Activated CD8-positive, alpha-beta memory T cell treated with anti-CD3 and anti-CD28 coated beads, Interleukin-2, amount 10 ng/mL, durations not matched to agents 7 days and 5 days (primary cell): ENCODE measurements at regions of chr11 and their contacts with region 1.

Region 1: DNA sequence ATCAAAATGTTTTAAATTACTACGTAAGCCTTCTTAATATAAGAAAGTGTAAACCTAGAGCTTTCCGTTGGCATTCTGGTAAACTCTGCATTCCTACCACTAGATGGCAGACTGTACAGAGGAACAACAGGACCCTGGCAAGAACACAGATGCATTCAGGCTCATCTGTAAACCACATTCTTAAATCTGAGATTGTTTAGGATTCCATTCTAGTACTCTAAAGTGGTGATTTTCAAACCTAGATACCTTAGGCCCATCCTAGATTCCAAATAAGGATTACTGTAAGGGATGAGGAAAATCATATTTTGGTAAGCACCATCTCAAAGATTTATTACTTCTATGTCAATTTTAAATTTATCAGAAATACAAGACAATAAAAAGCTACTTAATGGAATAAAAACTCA is 26.9 kb downstream of the PICALM start:
- DNase-seq: peak; percentile 67
- ATAC-seq: peak; percentile 82
- H3K4me3 Mint-ChIP-seq: no peak overlapping the region
- H3K27ac Mint-ChIP-seq: peak overlapping the region; percentile 45
- H3K4me1 Mint-ChIP-seq: peaks cover 66% of the 10 kb centered on the region
- H3K27me3 Mint-ChIP-seq: no peaks in the 10 kb centered on the region

Region 2: GRCh38 chr11:85867751-85868150 is 174.2 kb before region 1 on chr11:
- CTCF ChIA-PET with region 1: no interaction called
- DNase-seq: no peak
- ATAC-seq: no peak
- H3K4me3 Mint-ChIP-seq: no peak overlapping the region
- H3K27ac Mint-ChIP-seq: no peak overlapping the region
- H3K4me1 Mint-ChIP-seq: no peaks in the 10 kb centered on the region
- H3K27me3 Mint-ChIP-seq: peaks cover 4% of the 10 kb centered on the region

Region 3: DNA sequence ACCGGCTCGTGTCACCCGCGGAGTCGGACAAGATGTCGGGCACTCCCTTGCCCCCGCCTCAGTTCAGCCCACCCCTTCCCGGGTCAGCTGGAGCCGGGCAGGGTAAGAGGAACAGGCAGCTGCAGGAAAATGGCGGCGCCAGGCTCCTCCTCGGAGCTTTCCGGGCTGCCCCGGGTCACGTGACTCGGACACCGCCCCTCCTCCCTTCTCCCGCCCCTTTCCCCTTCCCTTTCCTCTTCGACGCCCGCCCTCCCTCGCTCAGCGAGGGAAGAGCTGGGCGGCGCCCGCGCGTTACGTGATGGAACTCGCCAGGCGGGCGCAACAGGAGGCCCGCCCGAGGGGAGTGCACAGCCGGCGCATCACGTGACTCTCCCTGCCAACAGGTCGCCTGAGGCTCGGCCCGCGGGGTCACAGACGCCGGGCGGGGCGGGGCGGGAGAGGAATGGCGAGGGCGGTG is 27.0 kb after region 1 on chr11 and contains the start of gene PICALM:
- CTCF ChIA-PET with region 1: interaction called, 18 read pairs
- DNase-seq: peak; percentile 99
- ATAC-seq: peak; percentile 89
- H3K4me3 Mint-ChIP-seq: peak within 1 kb of the TSS; percentile 100
- H3K27ac Mint-ChIP-seq: peak within 1 kb of the TSS; percentile 92
- H3K4me1 Mint-ChIP-seq: peaks cover 25% of the 10 kb centered on the region
- H3K27me3 Mint-ChIP-seq: no peaks in the 10 kb centered on the region
- total RNA-seq, gene PICALM: 123 to 166 TPM

Region 4: GRCh38 chr11:86182976-86183584 is 141.1 kb after region 1 on chr11:
- CTCF ChIA-PET with region 1: interaction called, 10 read pairs
- DNase-seq: peak; percentile 89
- ATAC-seq: peak; percentile 83
- H3K4me3 Mint-ChIP-seq: no peak overlapping the region
- H3K27ac Mint-ChIP-seq: no peak overlapping the region
- H3K4me1 Mint-ChIP-seq: peaks cover 16% of the 10 kb centered on the region
- H3K27me3 Mint-ChIP-seq: no peaks in the 10 kb centered on the region

Region 5: DNA sequence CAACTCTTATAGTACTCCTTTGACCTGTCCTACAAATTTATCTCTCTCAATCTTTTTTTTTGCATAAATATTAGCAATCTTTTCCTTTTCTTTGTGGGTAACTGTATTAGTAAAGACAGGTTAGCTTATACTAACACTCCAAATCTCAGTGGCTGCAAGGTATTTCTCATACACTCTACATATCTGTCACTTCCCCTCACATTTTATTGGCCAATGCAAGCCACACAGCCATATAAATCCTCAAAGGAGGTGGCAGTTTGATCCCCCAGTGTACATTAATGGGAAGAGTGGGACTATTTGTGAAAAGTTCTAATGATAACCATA is 160.0 kb after region 1 on chr11:
- CTCF ChIA-PET with region 1: interaction called, 23 read pairs
- DNase-seq: peak; percentile 57
- ATAC-seq: peak; percentile 81
- H3K4me3 Mint-ChIP-seq: no peak overlapping the region
- H3K27ac Mint-ChIP-seq: no peak overlapping the region
- H3K4me1 Mint-ChIP-seq: peaks cover under 1% of the 10 kb centered on the region
- H3K27me3 Mint-ChIP-seq: no peaks in the 10 kb centered on the region

Region 6: DNA sequence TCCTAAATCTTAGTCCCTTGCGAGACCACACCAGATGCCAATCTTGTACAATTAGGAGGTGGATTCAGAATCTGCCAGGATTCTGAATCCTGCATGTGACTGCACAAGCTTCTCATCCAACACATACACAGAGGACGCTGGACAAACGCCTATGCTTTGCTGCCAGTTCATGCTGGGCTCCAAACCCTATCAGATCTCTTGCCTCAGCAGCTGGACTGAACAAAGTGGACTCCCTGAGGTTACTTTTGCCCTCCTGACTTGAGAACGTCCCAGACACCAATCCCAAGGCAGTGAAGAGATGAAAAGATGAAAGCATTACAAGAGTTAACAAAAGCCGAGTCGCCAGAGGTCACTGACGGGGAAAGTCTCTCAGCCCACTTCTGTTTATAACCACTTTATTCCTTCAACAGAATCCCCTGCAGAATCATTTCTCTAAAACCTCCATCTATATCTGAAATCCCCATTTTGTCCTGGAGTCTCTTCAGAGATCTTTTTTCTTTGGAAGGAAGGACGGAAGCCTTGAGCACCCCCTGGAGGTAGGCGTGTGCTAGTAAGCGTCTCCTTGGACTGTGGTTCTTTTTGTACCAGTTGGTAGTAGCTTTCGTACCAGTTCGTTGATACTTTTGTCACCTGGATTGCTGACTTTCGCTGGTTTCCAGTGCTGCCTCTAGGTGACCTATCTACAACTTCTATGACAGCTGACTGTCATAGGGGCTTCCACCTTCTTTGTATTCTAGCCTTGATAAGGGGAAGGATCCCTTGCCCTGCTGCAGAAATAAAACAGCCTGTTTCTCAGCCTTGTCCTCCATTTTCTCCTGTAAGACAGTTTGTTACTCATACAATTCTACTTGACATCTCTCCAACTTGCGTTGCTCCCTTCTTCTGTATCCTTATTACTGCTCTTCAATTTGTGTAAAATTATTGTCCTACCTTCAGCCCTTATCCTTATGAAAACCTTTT is 176.4 kb after region 1 on chr11:
- CTCF ChIA-PET with region 1: interaction called, 13 read pairs
- DNase-seq: peak; percentile 77
- ATAC-seq: peak; percentile 87
- H3K4me3 Mint-ChIP-seq: peak overlapping the region; percentile 61
- H3K27ac Mint-ChIP-seq: peak overlapping the region; percentile 61
- H3K4me1 Mint-ChIP-seq: peaks cover 35% of the 10 kb centered on the region
- H3K27me3 Mint-ChIP-seq: no peaks in the 10 kb centered on the region

Region 7: GRCh38 chr11:86230921-86231430 is 189.0 kb after region 1 on chr11:
- CTCF ChIA-PET with region 1: interaction called, 14 read pairs
- DNase-seq: no peak
- ATAC-seq: no peak
- H3K4me3 Mint-ChIP-seq: no peak overlapping the region
- H3K27ac Mint-ChIP-seq: no peak overlapping the region
- H3K4me1 Mint-ChIP-seq: peaks cover 31% of the 10 kb centered on the region
- H3K27me3 Mint-ChIP-seq: peaks cover 4% of the 10 kb centered on the region

Region 8: DNA sequence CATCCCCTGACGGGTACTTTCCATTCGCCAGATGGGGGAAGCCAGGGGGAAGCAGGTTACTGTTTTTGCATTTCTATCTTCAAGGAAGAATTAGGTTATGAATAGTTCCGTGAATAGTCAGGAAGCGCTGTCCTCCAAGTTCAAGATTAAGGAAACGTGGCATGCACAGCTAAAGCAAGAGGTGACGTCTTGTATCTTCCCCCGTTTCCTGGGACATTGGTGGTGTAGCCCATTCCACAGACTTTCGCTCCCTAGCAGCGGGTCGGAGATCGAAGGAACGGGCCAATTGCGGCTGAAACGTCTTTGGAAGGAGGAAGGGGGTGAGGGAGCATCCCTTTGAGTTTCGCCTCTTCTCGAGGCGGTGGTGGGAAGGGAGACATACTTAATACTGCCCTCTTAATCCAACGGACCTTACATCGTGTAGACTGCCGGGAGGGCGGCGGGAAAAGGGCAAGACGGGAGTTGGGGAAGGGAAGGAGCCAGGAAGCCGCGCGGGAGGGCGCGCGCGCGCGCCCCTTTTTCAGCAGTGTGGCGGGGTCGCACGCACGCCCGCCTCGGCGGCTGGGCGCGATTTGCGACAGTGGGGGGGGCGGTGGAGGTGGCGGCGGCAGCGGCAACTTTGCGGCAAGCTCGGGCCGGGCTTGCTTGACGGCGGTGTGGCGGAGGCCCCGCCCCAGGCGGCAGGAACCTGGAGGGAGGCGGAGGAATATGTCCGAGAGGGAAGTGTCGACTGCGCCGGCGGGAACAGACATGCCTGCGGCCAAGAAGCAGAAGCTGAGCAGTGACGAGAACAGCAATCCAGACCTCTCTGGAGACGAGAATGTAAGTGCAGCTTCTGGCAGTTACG is 202.8 kb after region 1 on chr11 and contains the start of gene EED:
- CTCF ChIA-PET with region 1: interaction called, 10 read pairs
- DNase-seq: peak; percentile 97
- ATAC-seq: peak; percentile 85
- H3K4me3 Mint-ChIP-seq: no peak within 1 kb of the TSS
- H3K27ac Mint-ChIP-seq: no peak within 1 kb of the TSS
- H3K4me1 Mint-ChIP-seq: peaks cover 49% of the 10 kb centered on the region
- H3K27me3 Mint-ChIP-seq: no peaks in the 10 kb centered on the region
- total RNA-seq, gene EED: 50.1 to 102 TPM